A673 (cell line): ENCODE measurements at regions of chrX and their contacts with region 1.

Region 1: DNA sequence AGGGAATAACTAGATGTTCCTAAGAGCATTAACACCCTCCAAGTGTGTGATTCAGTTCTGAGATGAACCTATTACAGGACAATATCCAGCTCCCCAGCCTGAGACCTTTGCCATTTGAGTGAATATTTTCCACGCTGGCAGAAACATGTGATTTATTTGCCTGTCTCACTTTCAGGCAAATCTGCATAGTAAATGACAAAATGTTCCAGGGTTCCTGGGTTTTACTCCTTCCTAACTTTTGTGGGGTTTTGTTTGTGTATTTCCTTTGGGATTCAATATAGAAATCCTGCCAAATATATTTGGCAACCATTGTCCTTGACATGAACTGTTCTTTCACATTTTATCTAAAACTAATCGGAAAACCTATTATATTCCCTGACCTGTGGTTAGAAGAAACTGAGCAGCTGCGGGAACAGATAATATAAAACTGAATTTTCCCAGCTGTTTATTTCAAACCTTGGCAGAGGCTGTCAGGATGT is 12.5 kb downstream of the F8 start:
- DNase-seq: no peak
- H3K4me3 ChIP-seq: no peak overlapping the region
- H3K27ac ChIP-seq: no peak overlapping the region
- H3K4me1 ChIP-seq: no peaks in the 10 kb centered on the region
- H3K27me3 ChIP-seq: no peaks in the 10 kb centered on the region
- CTCF ChIP-seq: no peak

Region 2: GRCh38 chrX:154607370-154607769 is 402.7 kb before region 1 on chrX:
- CTCF ChIA-PET with region 1: no interaction called
- POLR2A ChIA-PET with region 1: no interaction called
- intact Hi-C with region 1: no loop called
- DNase-seq: no peak
- H3K4me3 ChIP-seq: no peak overlapping the region
- H3K27ac ChIP-seq: no peak overlapping the region
- H3K4me1 ChIP-seq: no peaks in the 10 kb centered on the region
- H3K27me3 ChIP-seq: no peaks in the 10 kb centered on the region
- CTCF ChIP-seq: no peak

Region 3: GRCh38 chrX:154827194-154828015 is 182.6 kb before region 1 on chrX:
- CTCF ChIA-PET with region 1: no interaction called
- POLR2A ChIA-PET with region 1: no interaction called
- intact Hi-C with region 1: no loop called
- DNase-seq: no peak
- H3K4me3 ChIP-seq: no peak overlapping the region
- H3K27ac ChIP-seq: no peak overlapping the region
- H3K4me1 ChIP-seq: no peaks in the 10 kb centered on the region
- H3K27me3 ChIP-seq: no peaks in the 10 kb centered on the region
- CTCF ChIP-seq: no peak

Region 4: GRCh38 chrX:154961947-154962346 is 48.1 kb before region 1 on chrX:
- CTCF ChIA-PET with region 1: no interaction called
- POLR2A ChIA-PET with region 1: no interaction called
- intact Hi-C with region 1: loop called (anchors 10 kb)
- DNase-seq: no peak
- H3K4me3 ChIP-seq: no peak overlapping the region
- H3K27ac ChIP-seq: no peak overlapping the region
- H3K4me1 ChIP-seq: no peaks in the 10 kb centered on the region
- H3K27me3 ChIP-seq: no peaks in the 10 kb centered on the region
- CTCF ChIP-seq: no peak

Region 5: GRCh38 chrX:155242300-155242699 is 232.3 kb after region 1 on chrX:
- CTCF ChIA-PET with region 1: no interaction called
- POLR2A ChIA-PET with region 1: no interaction called
- intact Hi-C with region 1: no loop called
- DNase-seq: no peak
- H3K4me3 ChIP-seq: no peak overlapping the region
- H3K27ac ChIP-seq: no peak overlapping the region
- H3K4me1 ChIP-seq: no peaks in the 10 kb centered on the region
- H3K27me3 ChIP-seq: no peaks in the 10 kb centered on the region
- CTCF ChIP-seq: no peak